RWPE1 (cell line): ENCODE measurements at regions of chr17 and their contacts with region 1.

Region 1: DNA sequence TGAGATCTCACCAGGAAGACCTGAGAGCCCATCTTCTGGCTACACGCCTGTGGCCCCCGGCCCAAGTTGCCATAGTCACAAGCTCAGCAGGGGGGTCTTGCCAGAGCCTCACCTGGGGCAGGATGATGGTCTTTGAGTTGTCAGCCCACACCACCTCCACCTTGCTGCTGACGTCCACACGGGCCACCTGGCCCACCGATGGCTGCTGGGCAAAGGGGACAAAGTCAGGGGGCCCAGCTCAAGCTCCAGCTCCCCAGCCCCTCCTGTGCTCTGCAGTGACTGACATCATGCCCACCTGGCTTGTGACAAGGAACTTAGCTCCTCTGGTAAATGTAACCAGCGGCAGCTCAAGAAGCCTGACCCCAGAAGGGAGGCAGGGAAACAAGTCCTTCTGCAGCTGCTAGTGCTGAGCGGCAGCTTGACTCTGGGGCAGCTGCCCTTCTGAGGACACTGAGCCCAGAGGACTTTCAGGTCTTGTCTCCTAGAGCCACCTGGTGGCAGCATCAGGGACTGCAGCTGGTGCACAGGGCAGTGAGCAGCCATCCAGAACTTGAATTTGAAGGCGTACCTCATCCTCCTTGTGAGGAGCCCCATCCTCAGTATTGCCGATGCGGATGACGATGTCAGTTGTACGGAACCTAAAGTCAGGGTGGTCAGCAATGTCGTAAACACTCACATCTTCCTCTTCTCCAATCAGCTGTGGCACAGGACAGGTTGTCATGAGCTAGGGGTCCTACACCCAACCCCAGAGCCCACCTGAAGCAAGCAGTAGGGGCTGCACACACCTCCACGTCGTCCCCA is 13.5 kb downstream of the SPHK1 start:
- DNase-seq: peak; percentile 73
- H3K27ac ChIP-seq: peak overlapping the region; percentile 39; the same call in 1 of the 2 replicates
- CTCF ChIP-seq: peak; percentile 99

Region 2: DNA sequence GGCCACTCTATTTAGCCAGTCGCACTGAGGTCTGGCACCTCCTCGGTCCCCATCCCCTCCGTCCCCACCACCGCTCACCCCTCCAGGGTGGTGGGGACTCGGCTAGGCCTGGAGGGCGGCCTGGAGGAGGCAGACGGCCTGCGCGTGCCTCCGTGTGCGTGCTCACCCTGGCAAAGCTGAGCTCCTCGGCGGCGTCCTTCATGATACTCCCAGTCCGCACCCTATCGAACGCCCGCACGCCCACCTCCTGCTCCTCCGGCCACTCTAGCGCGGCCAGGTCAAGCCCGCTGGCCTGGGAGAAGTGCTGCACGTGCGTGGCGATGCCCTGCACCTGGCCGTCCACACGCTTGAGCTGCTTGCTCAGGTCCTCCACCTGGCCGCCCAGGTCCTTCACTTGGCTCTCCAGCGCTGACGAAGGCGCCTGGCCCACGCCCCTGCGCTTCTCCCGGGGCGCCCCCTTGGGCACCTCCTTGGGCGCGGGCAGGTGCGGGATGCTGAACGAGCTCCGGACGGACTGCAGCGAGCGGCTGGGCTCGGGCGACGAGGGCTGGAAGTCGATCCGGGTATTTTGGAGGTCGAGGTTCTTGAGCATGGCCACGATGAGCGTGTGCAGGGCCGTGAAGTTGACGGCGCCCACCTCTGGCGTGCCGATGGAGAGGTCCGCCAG is 90.5 kb before region 1 on chr17:
- CTCF ChIA-PET with region 1: interaction called, 22 read pairs
- POLR2A ChIA-PET with region 1: no interaction called
- DNase-seq: no peak
- H3K27ac ChIP-seq: peak overlapping the region; percentile 5; the same call in 1 of the 2 replicates
- CTCF ChIP-seq: no peak

Region 3: DNA sequence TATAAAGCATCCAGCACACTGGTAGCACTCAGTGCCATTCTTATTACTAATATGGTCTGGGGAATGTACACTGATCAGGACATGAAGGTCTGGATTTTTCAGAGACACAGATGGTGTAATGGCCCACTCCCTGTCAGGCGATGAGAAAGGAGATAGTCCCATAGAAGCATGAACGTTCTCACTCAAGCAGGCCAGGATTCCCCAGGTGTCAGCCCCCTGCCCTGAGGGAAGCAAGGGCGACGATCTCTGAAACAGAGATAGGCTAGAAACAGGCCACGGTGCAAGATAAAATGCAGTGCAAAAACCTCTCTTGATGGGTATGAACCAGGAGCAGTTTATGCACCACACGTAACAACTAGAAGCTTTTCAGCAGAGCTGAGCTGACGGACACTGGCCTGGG is 54.8 kb before region 1 on chr17:
- CTCF ChIA-PET with region 1: no interaction called
- POLR2A ChIA-PET with region 1: no interaction called
- DNase-seq: no peak
- H3K27ac ChIP-seq: peak overlapping the region; percentile 13
- CTCF ChIP-seq: no peak

Region 4: GRCh38 chr17:76353599-76354316 is 44.1 kb before region 1 on chr17 and contains the start of gene PRPSAP1:
- CTCF ChIA-PET with region 1: interaction called, 15 read pairs
- POLR2A ChIA-PET with region 1: no interaction called
- DNase-seq: peak; percentile 90
- H3K27ac ChIP-seq: peak within 1 kb of the TSS; percentile 92
- CTCF ChIP-seq: no peak

Region 5: DNA sequence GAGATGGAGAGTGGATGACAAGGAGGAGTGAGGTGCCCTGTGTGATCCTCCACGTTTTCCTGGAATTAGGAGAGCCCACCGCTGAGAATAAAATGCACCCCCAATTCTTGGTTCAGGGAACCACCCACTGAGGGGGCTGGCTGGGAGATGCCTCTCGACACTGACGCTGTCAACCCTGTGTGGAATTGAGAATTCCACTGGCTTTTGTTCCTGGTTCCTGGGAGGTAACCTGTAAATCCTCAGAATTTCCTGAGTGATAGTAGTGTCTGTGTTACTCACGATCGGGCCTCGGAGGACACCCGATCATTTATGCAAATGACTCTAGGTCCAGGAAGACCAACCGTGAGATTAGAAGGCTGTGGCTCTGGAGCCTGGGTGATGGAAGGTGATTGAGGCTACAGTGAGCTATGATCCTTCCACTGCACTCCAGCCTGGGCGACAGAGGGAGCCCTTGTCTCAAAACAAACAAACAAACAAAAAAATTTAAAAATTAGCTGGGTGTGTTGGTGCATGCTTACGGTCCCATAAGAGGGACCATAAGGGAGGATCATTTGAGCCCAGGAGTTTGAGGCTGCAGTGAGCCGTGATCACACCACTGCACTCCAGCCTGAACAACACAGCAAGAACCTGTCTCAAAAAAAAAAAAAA is 32.5 kb before region 1 on chr17:
- CTCF ChIA-PET with region 1: interaction called, 14 read pairs
- POLR2A ChIA-PET with region 1: no interaction called
- DNase-seq: no peak
- H3K27ac ChIP-seq: 0 out of 2 replicates have a peak overlapping the region, but pooled peaks have one; percentile 17
- CTCF ChIP-seq: no peak; the same call in 1 of the 2 replicates

Region 6: DNA sequence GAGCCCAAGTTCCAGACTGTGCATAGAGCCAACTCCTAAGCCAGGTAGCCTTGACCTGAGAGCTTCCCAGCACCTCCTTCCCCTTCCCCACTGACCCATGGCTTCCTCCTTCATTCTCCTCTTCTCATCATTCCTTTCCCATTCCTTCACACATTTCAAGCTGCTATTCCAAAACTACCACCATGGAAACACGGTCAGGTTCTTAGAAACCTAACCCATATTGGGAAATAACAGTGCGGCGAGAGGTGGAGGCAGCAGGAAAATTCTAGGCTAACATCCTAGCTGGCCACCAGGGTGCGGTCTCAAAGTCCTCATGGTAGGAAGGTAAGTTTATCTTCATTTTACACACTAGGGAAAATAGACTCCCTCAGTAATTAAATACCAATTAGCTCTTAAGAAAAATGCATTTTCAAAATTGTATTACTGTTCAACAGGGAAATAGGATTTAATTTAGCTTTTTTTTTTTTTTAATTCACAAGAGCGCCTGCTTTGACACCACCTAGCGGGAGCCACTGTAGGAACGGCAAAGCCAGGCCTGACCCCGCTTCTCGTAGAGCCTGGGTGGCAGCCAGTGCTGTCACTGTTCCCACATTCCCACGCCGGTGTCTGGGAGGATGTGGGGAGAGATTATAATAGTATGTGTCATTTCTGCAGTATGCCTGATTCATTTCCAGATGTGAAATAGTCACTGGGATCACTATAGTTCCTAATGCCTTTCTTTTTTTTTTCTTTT is 27.5 kb before region 1 on chr17:
- CTCF ChIA-PET with region 1: interaction called, 11 read pairs
- POLR2A ChIA-PET with region 1: no interaction called
- DNase-seq: peak; percentile 79
- H3K27ac ChIP-seq: peak overlapping the region; percentile 95
- CTCF ChIP-seq: peak; percentile 94

Region 7: GRCh38 chr17:76384222-76384986 is 13.5 kb before region 1 on chr17 and contains the start of gene SPHK1:
- CTCF ChIA-PET with region 1: interaction called, 30 read pairs
- POLR2A ChIA-PET with region 1: no interaction called
- DNase-seq: peak; percentile 88
- H3K27ac ChIP-seq: peak within 1 kb of the TSS; percentile 96
- CTCF ChIP-seq: no peak

Region 8: DNA sequence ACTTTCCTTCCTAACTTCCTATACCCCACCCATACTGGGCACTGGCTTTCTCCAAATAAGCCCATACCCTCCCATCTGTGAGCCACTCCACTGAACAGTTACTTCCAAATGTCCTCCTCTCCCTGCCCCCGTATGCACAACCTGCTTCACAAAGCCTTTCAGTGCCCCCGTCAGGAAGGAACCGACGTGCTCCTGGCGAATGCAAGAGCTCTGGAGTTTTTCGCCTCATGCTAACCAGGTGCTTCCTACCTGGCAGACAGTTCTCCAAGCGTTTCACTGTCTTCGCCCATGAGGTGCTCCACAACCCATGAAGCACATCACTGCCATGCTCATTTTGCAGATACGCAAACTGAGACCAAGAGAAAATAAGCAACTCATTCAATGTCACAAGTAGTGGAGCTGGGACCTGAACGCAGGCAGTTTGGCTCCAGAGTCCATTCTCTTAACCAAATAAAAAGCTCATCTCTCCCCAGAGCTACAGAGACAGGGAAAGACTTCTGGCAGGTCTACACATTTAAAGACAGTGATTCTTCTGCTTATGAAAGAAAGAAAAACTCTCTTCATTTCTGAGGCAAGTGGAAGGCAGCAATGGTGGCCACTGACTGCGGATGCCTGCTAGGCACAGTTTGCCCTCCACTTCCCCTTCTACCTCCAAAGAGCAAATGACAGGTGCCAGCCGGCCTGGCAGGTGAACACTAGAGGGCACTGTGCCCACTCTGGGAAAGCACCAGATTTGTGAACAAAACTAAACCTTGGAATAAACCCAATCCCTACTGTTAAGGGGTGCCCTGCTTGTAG is 10.4 kb after region 1 on chr17:
- CTCF ChIA-PET with region 1: interaction called, 10 read pairs
- POLR2A ChIA-PET with region 1: no interaction called
- DNase-seq: peak; percentile 60
- H3K27ac ChIP-seq: peak overlapping the region; percentile 12; the same call in 1 of the 2 replicates
- CTCF ChIP-seq: peak; percentile 99

Region 9: DNA sequence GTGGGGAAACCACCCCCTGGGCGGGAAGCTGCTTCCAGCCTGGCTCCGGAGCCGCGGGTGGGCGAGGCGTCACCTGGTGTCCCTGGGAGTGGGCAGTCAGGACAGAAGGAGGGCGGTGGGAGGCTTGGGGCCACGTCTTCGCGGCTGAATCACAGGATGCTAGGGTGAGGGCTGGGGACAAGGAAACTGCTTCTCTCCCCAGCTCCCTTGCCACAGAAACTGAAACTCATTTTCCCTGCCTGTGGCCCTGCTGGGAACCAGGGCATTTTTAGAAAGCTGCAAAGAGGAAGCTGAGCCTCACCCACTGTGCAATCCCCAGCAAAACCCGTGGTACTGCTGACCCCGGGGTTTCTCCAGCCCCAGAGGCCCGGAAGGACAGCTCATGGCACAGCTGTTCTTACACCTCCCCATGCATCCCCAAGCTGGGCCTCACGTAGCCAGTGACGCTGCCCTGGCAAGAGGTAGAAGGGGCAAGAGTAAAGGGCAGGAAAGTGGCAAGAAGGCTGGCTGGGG is 95.2 kb after region 1 on chr17:
- CTCF ChIA-PET with region 1: no interaction called
- POLR2A ChIA-PET with region 1: no interaction called
- DNase-seq: peak; percentile 52
- H3K27ac ChIP-seq: peak overlapping the region; percentile 89
- CTCF ChIP-seq: no peak

Region 10: DNA sequence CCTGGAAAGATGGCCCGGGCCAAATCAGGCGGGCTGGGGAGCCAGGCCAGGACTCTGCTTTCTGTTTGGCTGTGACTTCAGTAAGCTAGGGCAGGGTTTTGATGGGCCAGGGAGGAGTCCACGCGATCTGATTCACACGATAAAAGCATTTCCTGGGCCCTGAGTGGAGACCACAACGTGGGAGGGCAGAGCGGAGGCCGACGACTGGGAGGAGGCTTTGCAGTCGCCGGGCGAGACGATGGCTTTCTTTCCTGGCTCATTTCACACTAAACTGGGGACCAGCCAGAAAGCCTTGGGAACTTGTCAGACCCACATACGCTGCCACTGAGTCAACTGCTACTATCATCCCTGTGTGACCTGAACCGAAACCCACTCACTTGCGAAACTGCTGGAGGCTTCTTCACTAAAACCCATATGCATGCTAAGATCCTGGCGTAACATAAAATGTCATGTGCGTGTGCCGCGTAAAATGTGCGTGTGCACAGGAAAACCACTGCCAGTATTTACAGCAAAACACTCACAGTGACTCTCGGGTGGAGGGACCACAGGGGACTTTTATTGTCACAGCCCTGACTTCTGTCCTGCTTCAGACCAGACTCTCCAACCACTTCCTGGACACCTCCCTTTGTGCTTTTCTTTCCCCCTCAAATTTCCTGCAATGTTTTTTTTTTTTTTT is 117.5 kb after region 1 on chr17:
- CTCF ChIA-PET with region 1: no interaction called
- POLR2A ChIA-PET with region 1: no interaction called
- DNase-seq: no peak
- H3K27ac ChIP-seq: peak overlapping the region; percentile 15; the same call in 1 of the 2 replicates
- CTCF ChIP-seq: no peak

Region 11: GRCh38 chr17:76585818-76586593 is 188.1 kb after region 1 on chr17 and contains the start of gene ST6GALNAC2:
- CTCF ChIA-PET with region 1: no interaction called
- POLR2A ChIA-PET with region 1: no interaction called
- DNase-seq: peak; percentile 55
- H3K27ac ChIP-seq: peak within 1 kb of the TSS; percentile 96
- CTCF ChIP-seq: peak; percentile 79